Activated CD4-positive, alpha-beta memory T cell treated with anti-CD3 and anti-CD28 coated beads for 36 hours (primary cell): ENCODE measurements at regions of chr11 and their contacts with region 1.

Region 1: DNA sequence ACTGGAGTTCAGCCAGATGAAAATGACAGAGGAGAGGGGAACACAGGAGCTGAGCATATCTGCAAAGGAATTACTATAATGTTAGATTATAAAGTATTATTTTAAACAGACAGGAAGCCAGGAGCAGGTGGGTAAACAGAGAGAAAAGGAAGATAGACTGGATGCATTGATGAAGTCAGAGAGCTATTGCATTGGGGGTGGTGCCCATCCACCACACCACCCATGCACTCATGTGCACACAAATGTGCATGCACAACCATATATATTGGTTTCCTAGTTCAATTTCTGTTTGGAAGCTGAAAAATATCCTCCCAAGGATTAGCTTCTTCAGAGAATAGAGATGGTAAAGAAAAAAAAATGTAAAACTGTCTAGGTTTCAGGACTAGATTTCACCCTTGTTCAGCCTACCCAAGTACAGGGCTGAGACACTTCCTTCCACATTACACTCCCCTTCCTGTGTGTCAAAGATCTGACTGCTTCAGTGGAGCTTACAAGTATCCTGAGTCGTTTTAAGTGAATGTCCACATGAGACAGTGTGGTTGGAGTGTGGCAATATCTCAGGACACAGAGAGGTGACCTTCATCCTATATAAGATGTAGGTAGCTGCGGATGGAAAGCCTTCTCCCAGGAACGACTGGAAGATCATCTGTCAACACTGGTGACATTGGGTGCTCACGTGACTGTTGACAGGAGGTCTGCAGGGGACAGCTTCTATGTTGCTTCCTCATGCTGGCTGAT is 12.2 kb upstream of the SMPD1 start:
- DNase-seq: no peak
- H3K4me3 Mint-ChIP-seq: no peak overlapping the region
- H3K27ac Mint-ChIP-seq: peak overlapping the region; percentile 25
- H3K4me1 Mint-ChIP-seq: peaks cover 23% of the 10 kb centered on the region
- H3K27me3 Mint-ChIP-seq: no peaks in the 10 kb centered on the region

Region 2: GRCh38 chr11:6362873-6363678 is 15.0 kb before region 1 on chr11:
- CTCF ChIA-PET with region 1: interaction called, 67 read pairs
- POLR2A ChIA-PET with region 1: no interaction called
- intact Hi-C with region 1: no loop called
- DNase-seq: peak; percentile 85
- H3K4me3 Mint-ChIP-seq: no peak overlapping the region
- H3K27ac Mint-ChIP-seq: no peak overlapping the region
- H3K4me1 Mint-ChIP-seq: peaks cover 3% of the 10 kb centered on the region
- H3K27me3 Mint-ChIP-seq: no peaks in the 10 kb centered on the region

Region 3: GRCh38 chr11:6413791-6414201 is 35.7 kb after region 1 on chr11:
- CTCF ChIA-PET with region 1: interaction called, 37 read pairs
- POLR2A ChIA-PET with region 1: interaction called, 5 read pairs
- intact Hi-C with region 1: no loop called
- DNase-seq: peak; percentile 84
- H3K4me3 Mint-ChIP-seq: no peak overlapping the region
- H3K27ac Mint-ChIP-seq: no peak overlapping the region
- H3K4me1 Mint-ChIP-seq: peaks cover 15% of the 10 kb centered on the region
- H3K27me3 Mint-ChIP-seq: no peaks in the 10 kb centered on the region

Region 4: DNA sequence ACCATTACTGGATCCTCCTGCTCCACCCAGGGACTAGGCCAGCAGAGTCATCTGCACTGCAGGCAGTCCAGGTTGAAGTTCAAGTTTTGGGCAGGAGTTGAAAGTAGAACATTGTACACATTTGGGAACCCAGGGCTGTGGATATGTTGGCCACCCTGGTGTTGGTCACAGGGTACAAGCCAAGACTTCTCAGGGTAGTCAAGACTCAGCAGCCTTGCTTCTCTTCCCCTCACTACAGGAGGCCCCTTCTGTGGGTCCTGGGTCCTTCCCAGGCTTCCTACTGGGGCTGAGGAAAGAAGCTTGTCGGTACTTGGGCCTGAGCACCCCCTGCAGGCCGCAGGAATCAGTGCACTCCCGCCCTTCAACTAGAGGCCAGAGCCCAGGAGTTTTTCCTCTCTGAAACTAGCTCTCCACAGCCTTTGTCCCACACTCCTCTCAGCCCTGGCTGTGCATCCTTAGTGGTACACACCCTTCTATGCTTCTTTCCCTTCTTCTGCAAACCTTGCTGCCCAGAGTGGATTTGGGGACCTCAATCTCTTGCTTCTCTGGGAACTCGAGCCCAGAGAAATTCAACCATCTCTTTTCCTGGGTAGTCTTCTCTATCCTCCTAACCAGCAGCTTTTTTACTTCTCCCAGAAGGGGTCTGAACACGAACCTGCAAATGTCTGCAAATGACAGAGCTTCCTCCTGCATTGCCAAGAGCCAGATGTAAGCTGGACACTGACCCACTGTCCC is 65.4 kb after region 1 on chr11:
- CTCF ChIA-PET with region 1: interaction called, 661 read pairs
- POLR2A ChIA-PET with region 1: interaction called, 14 read pairs
- intact Hi-C with region 1: loop called (anchors 1 kb)
- DNase-seq: peak; percentile 66
- H3K4me3 Mint-ChIP-seq: no peak overlapping the region
- H3K27ac Mint-ChIP-seq: no peak overlapping the region
- H3K4me1 Mint-ChIP-seq: no peaks in the 10 kb centered on the region
- H3K27me3 Mint-ChIP-seq: no peaks in the 10 kb centered on the region

Region 5: DNA sequence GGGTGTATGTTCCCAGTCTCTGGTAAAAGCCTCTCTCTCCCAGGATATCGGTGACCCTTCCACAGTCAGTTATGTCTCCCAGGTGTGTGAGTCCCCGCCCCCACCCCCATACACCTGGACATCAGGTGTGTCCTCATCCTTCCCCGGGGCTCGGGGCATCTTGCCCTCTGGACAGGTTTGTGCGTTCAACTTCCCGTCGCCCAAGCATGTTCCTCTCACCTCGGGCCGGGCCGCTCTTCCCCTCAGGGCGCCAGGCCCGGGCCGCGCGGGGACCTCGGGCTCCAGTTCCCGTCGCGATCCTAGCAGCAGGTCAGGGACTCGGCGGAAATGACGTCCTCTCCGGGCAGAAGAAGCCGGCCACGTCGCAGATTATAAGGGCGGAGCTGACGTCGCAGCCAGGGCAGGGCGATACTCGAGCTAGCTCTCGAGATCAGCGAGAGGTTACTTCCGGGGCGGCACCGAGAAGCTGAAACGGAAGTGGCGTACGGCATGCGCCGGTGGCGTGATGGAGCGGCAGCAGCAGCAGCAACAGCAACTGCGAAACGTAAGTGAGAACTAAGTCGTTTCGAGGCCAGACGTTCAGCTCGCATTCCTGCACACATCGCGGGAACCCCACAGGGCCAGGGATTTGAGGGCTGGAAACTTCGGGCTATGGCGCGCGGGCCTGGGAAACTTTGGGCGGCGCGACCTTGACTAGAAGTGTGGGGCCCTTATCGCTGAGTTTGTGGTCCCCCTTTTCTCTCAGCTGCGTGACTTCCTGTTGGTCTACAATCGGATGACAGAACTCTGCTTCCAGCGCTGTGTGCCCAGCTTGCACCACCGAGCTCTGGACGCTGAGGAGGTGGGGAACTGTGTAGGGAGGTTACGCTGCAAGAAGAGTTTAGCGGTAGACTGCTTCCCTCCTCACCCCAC is 103.2 kb after region 1 on chr11 and contains the starts of genes ARFIP2 and TIMM10B:
- CTCF ChIA-PET with region 1: interaction called, 45 read pairs
- POLR2A ChIA-PET with region 1: no interaction called
- intact Hi-C with region 1: no loop called
- DNase-seq: peak; percentile 99
- H3K4me3 Mint-ChIP-seq: peak within 1 kb of the TSS; percentile 91
- H3K27ac Mint-ChIP-seq: peak within 1 kb of the TSS; percentile 96
- H3K4me1 Mint-ChIP-seq: peaks cover 35% of the 10 kb centered on the region
- H3K27me3 Mint-ChIP-seq: no peaks in the 10 kb centered on the region
- total RNA-seq, gene ARFIP2: 35.1 to 37.8 TPM
- total RNA-seq, gene TIMM10B: 40.2 to 41.3 TPM

Region 6: GRCh38 chr11:6619004-6619745 is 241.1 kb after region 1 on chr11 and contains the start of gene TPP1:
- CTCF ChIA-PET with region 1: interaction called, 10 read pairs
- POLR2A ChIA-PET with region 1: no interaction called
- intact Hi-C with region 1: no loop called
- DNase-seq: peak; percentile 93
- H3K4me3 Mint-ChIP-seq: no peak within 1 kb of the TSS
- H3K27ac Mint-ChIP-seq: no peak within 1 kb of the TSS
- H3K4me1 Mint-ChIP-seq: peaks cover 10% of the 10 kb centered on the region
- H3K27me3 Mint-ChIP-seq: no peaks in the 10 kb centered on the region
- total RNA-seq, gene TPP1: 53.2 to 56.6 TPM

Region 7: DNA sequence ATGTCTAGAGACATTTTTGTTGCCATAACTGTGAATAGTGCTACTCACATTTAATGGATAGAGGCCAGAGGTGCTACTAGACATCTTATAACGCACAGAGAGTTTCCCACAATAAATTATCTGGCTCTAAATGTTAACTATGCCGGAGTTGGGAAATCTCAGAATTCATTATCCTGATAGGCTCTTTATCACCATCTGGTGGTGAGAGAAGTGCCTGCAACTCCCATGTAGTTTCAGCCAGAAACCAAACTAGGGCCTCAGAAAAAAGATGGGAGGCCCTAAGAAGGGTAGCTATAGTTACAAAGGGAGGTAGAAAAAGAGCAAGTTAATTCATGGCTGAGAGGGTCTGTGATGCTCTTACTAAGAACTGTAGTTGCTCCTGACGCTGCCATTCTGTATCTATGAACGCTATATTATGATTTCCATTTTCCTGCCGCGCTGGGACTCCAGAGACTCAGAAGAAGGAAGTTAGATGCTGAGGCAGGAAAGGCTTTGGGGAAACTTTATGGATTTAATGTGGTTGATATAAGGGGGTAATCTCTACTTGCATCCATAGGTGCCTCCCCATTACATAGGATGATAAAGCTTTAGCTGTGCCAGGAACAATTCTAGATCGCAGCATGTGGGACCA is 327.9 kb after region 1 on chr11:
- CTCF ChIA-PET with region 1: interaction called, 13 read pairs
- POLR2A ChIA-PET with region 1: no interaction called
- intact Hi-C with region 1: loop called (anchors 1 kb)
- DNase-seq: peak; percentile 53
- H3K4me3 Mint-ChIP-seq: no peak overlapping the region
- H3K27ac Mint-ChIP-seq: peak overlapping the region; percentile 57
- H3K4me1 Mint-ChIP-seq: peaks cover 18% of the 10 kb centered on the region
- H3K27me3 Mint-ChIP-seq: no peaks in the 10 kb centered on the region